ENCODE measurements at regions of chr2 and their contacts with region 1.

Region 1: DNA sequence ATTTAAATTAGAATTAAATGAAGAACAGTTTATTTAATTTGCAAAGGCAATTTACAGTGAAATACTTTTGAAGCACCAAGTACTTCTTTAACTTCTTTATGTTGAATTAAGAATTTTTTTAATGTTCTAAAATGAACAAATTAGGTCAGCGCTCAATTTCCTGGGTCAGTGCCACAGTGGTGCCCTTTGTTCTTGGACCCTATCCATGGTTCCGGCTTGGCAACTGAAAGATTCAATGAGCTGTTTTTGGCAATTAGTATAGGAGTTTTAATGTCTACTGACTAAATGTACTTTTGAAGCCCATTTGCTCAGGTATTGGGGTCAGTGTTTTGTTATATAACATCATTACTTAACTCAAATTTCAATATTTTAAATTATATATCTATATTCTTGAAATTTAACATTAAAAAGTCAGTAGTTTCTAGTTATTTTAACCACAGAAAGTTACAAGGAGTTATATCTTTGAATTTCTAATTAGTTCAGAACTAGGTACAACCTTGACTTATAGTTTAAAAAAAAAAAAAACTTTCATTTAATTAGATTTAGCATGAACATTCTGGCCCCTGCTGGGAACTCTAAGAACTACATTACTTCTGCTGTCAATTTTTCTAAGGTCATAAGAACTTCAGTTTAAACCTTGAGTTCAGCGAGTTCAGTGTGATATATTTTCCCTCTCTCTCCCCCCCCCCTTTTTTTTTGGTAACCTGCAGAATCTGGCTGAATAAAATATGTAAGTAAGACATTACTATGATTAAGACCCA is 7.6 kb upstream of the MSTN start:
- DNase-seq: peak in 1 of 2 experiments; percentile 60
- H3K4me3 ChIP-seq: no peak overlapping the region
- H3K4me3 Mint-ChIP-seq: no peak overlapping the region
- H3K27ac Mint-ChIP-seq: no peak overlapping the region
- H3K4me1 ChIP-seq: no peaks in the 10 kb centered on the region
- H3K4me1 Mint-ChIP-seq: no peaks in the 10 kb centered on the region
- H3K27me3 ChIP-seq: no peaks in the 10 kb centered on the region
- H3K27me3 Mint-ChIP-seq: peaks cover 4% of the 10 kb centered on the region
- CTCF ChIP-seq: peak; percentile 63 to 78

Region 2: DNA sequence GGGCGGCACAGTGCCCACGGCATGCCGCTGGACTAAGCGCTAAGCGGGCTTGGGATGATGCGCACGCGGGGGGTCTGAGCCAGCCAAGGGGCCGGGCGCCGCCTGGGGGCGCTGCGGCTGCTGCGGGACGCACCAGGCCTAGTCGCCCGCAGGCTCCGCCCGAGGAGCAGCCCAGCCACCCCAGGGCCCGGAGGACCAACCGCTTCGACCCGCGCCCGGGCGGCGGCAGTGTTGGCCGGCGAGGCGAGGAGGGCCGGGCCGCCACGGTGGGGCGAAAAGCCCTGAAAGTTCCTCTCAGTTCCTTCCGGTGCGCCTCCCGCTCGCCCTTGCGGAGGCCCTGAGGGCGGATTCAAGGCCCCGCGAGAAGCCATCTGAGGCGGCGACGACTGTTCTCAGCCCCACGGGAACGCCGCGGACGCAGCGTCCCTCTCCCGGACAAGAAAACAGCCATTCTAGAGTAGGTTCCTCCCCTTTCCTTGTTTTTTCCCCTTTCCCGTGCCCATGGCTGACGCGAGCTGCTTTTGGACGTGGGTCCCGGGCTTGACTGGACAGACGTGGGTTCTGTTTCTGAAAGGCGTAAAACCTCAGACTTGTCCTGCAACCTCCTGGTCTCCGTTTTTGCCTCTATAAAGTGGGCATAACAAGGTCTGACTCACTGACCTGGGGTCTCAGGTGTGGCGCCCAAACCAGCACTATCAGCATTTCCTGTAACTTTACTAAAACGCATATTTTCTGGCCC is 395.6 kb before region 1 on chr2 and contains the start of gene ANKAR:
- CTCF ChIA-PET with region 1: no interaction called
- POLR2A ChIA-PET with region 1: no interaction called
- intact Hi-C with region 1: loop called (anchors 1 kb)
- DNase-seq: peak; percentile 94 to 98
- H3K4me3 ChIP-seq: peak within 1 kb of the TSS; percentile 77
- H3K4me3 Mint-ChIP-seq: peak within 1 kb of the TSS; percentile 88
- H3K27ac Mint-ChIP-seq: peak within 1 kb of the TSS; percentile 92
- H3K4me1 ChIP-seq: no peaks in the 10 kb centered on the region
- H3K4me1 Mint-ChIP-seq: peaks cover 11% of the 10 kb centered on the region
- H3K27me3 ChIP-seq: no peaks in the 10 kb centered on the region
- H3K27me3 Mint-ChIP-seq: no peaks in the 10 kb centered on the region
- CTCF ChIP-seq: peak; percentile 68 to 79
- total RNA-seq, gene ANKAR: 2.2 and 4.7 TPM in 2 replicates

Region 3: GRCh38 chr2:189751080-189751658 is 318.9 kb before region 1 on chr2:
- CTCF ChIA-PET with region 1: no interaction called
- POLR2A ChIA-PET with region 1: no interaction called
- intact Hi-C with region 1: loop called (anchors 1 kb)
- DNase-seq: peak; percentile 53 to 61
- H3K4me3 ChIP-seq: no peak overlapping the region
- H3K4me3 Mint-ChIP-seq: no peak overlapping the region
- H3K27ac Mint-ChIP-seq: no peak overlapping the region
- H3K4me1 ChIP-seq: no peaks in the 10 kb centered on the region
- H3K4me1 Mint-ChIP-seq: no peaks in the 10 kb centered on the region
- H3K27me3 ChIP-seq: no peaks in the 10 kb centered on the region
- H3K27me3 Mint-ChIP-seq: no peaks in the 10 kb centered on the region
- CTCF ChIP-seq: peak; percentile 57 to 69

Region 4: GRCh38 chr2:189798312-189799029 is 271.6 kb before region 1 on chr2:
- CTCF ChIA-PET with region 1: interaction called, 6 read pairs
- POLR2A ChIA-PET with region 1: no interaction called
- intact Hi-C with region 1: loop called (anchors 1 kb)
- DNase-seq: no peak
- H3K4me3 ChIP-seq: no peak overlapping the region
- H3K4me3 Mint-ChIP-seq: no peak overlapping the region
- H3K27ac Mint-ChIP-seq: no peak overlapping the region
- H3K4me1 ChIP-seq: no peaks in the 10 kb centered on the region
- H3K4me1 Mint-ChIP-seq: no peaks in the 10 kb centered on the region
- H3K27me3 ChIP-seq: no peaks in the 10 kb centered on the region
- H3K27me3 Mint-ChIP-seq: no peaks in the 10 kb centered on the region
- CTCF ChIP-seq: peak; percentile 36 to 55

Region 5: GRCh38 chr2:189982777-189983394 is 87.2 kb before region 1 on chr2:
- CTCF ChIA-PET with region 1: no interaction called
- POLR2A ChIA-PET with region 1: no interaction called
- intact Hi-C with region 1: loop called (anchors 2 kb)
- DNase-seq: peak in 1 of 2 experiments; percentile 19
- H3K4me3 ChIP-seq: no peak overlapping the region
- H3K4me3 Mint-ChIP-seq: no peak overlapping the region
- H3K27ac Mint-ChIP-seq: no peak overlapping the region
- H3K4me1 ChIP-seq: no peaks in the 10 kb centered on the region
- H3K4me1 Mint-ChIP-seq: no peaks in the 10 kb centered on the region
- H3K27me3 ChIP-seq: no peaks in the 10 kb centered on the region
- H3K27me3 Mint-ChIP-seq: no peaks in the 10 kb centered on the region
- CTCF ChIP-seq: peak in 1 of 2 experiments; percentile 54

Region 6: GRCh38 chr2:190023861-190024260 is 46.3 kb before region 1 on chr2:
- CTCF ChIA-PET with region 1: no interaction called
- POLR2A ChIA-PET with region 1: no interaction called
- intact Hi-C with region 1: loop called (anchors 1 kb)
- DNase-seq: peak in 1 of 2 experiments; percentile 66
- H3K4me3 ChIP-seq: no peak overlapping the region
- H3K4me3 Mint-ChIP-seq: no peak overlapping the region
- H3K27ac Mint-ChIP-seq: no peak overlapping the region
- H3K4me1 ChIP-seq: no peaks in the 10 kb centered on the region
- H3K4me1 Mint-ChIP-seq: no peaks in the 10 kb centered on the region
- H3K27me3 ChIP-seq: no peaks in the 10 kb centered on the region; the same call in 1 of the 2 replicates
- H3K27me3 Mint-ChIP-seq: peaks cover 11% of the 10 kb centered on the region
- CTCF ChIP-seq: peak; percentile 51 to 54

Measured in Caco-2 (cell line).